Psoas muscle (tissue), 8 donors: ENCODE measurements at regions of chr9 and their contacts with region 1.

Region 1: GRCh38 chr9:107489687-107490605 is at the start of gene KLF4:
- DNase-seq: peak; percentile 90 to 94
- ATAC-seq: peak; percentile 87 to 90 (median 88)
- H3K4me3 ChIP-seq: peak within 1 kb of the TSS; percentile 94
- H3K27ac ChIP-seq: peak within 1 kb of the TSS; percentile 94
- H3K4me1 ChIP-seq: peaks cover 13% of the 10 kb centered on the region
- H3K27me3 ChIP-seq: no peaks in the 10 kb centered on the region
- CTCF ChIP-seq: no peak
- total RNA-seq, gene KLF4: 11.6 to 17.2 (median 14.7) TPM

Region 2: GRCh38 chr9:107749787-107750444 is 260.0 kb after region 1 on chr9:
- intact Hi-C with region 1: loop called (anchors 2 to 10 kb)
- DNase-seq: peak; percentile 93 to 95
- ATAC-seq: peak; percentile 88 to 94 (median 90)
- H3K4me3 ChIP-seq: no peak overlapping the region
- H3K27ac ChIP-seq: peak overlapping the region; percentile 94
- H3K4me1 ChIP-seq: peaks cover 26% of the 10 kb centered on the region
- H3K27me3 ChIP-seq: no peaks in the 10 kb centered on the region
- CTCF ChIP-seq: no peak

Region 3: DNA sequence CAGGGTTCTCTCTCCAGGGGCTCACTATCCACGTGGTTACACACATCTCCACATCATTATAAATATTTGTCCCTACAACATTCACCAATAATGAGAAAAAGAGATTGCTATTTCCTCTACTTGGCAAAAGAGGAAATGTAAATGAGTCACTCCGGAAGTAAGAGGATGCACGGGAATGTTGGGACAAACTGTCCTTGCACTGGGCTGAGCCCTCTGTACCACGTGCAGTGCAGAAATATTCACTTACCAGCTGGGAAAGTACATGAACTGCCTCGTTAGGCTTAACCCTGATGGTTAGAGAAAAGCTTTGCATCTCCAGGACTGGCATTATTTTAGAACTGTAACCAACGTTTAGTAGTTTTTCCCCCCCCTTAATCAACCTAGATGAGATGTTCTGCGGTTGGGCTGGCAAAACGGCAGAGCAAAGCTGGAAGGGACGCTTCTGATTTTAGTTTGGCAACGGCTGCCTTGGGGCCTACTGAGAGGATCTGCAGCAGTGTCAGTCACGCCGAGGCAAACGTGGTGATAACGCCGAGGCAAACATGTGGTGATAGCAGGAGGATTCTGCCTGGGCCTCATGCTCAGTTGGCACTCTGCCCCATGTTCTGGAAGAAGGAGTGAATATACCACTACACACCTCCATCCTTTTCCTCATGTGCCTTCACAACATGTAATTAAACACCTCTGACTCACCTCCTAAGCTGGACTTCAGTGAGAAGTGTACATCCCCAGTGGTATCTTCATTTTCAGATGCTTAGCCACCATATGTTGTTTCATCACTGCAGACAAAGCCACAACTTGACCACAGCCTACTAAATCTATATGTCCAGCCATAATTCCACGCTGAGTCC is 661.0 kb after region 1 on chr9:
- intact Hi-C with region 1: loop called in 1 of 2 experiments (anchors 10 kb)
- DNase-seq: peak; percentile 27 to 58
- ATAC-seq: peak; percentile 32 to 89 (median 80)
- H3K4me3 ChIP-seq: no peak overlapping the region
- H3K27ac ChIP-seq: peak overlapping the region; percentile 21
- H3K4me1 ChIP-seq: peaks cover 10% of the 10 kb centered on the region
- H3K27me3 ChIP-seq: no peaks in the 10 kb centered on the region
- CTCF ChIP-seq: no peak

Region 4: DNA sequence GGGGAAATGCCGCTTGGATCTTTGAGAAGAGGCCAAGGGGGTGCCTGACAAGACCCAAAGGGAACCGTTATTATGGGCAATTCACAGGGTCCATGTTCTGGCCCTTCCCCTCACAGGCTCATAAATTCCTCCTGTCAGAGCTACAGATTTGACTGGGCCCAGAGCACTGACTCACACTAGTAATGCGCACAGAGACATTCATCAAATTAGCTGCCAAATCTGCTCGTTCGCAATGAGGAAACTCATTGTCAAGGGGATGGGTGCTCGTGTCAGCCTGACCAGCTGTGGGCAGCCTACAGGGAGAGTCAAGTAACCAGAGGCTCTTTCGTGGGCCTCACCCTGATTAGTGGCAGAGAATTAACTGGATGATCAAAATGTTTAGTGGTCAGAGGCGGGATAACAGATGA is 988.5 kb after region 1 on chr9:
- intact Hi-C with region 1: loop called in 1 of 2 experiments (anchors 10 kb)
- DNase-seq: peak; percentile 28 to 72
- ATAC-seq: peak; percentile 82 to 91 (median 86)
- H3K4me3 ChIP-seq: peak overlapping the region; percentile 6
- H3K27ac ChIP-seq: peak overlapping the region; percentile 89
- H3K4me1 ChIP-seq: peaks cover 45% of the 10 kb centered on the region
- H3K27me3 ChIP-seq: no peaks in the 10 kb centered on the region
- CTCF ChIP-seq: peak; percentile 21